HEK293 (cell line): ENCODE measurements at regions of chr20 and their contacts with region 1.

Region 1: DNA sequence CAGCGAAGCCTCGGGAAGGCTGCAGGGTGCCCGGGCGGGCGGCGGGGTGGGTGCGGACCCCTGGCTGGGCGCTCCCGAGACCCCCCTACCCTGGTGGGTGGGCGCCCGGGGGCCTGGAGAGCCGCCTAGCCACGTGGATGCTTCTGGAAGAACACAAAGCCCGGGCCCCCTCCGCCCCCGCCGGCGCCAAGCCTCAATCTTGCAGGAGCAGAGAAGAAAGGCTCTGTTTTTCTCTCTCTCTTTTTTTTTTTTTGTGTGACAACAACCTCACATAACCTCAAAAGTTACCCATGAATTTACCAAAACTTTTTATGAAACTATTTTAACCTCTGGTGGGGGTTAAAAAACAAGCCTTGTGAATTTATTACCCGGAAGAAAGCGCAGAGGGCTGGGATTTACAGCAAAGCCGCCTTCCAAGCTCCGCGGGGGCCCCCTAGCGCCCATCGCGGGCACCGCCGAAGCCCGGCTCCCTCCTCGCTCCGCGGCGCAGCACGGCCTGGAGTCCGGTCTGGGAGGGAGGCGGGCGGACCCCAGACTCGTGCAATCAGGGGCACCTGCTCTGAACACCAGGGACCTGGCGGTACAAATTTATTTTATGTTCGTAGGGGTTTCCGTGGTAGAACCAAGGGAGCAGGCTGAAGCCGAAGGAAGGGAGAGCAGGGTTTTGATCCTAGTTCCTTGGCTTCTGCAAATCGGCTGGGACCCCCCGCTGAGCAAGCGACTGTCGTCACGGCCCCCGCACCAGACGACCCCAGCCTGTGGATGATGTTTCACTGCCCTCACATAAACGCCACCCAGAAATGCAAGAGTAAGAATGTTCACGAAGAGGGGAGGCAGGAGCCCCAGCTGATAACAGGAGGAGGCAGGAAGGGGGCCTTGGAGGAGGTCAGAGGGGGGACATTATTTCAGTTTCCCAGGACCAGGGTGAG is 58.9 kb downstream of the ZNF831 start:
- H3K4me3 ChIP-seq: peak overlapping the region; percentile 35
- H3K27ac ChIP-seq: peak overlapping the region; percentile 24; the same call in 1 of the 2 replicates
- H3K4me1 ChIP-seq: no peaks in the 10 kb centered on the region
- CTCF ChIP-seq: peak; percentile 65; the same call in 1 of the 2 replicates

Region 2: DNA sequence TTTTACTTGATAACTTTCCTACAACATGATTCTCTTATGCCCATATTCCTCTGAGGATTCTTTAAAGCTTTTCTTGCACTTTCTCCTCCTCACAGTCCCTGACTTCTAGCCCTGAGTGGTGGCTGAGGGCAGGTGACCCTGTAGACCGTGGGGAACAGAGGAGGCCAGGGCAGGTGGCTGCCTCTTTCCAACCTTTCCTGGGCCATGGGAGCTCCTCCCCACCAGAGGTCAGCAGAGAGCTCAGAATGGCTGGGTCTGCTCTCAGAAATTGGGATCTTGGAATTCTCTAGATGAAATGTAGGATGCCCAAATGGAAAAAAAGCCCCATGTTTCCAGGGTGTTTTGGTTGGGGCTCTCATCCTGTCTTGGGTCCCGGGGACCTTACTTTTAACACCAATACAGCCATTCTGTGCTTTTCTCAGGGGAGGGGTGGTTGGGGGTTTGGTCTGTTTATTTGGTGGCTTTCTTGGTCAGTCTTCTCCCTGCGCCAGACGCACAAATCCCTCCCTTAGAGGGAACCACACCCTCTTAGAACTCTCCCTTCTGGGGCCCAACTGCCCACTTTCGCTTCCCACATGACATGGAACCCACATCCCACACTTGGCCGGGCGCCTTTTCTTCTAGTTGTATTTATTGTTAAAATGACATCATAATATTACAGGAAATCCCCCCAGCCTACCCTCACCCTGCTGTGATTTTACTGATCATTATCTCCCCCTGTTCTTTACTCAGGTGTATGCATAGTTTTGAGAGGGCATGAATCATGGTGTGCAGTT is 352.1 kb before region 1 on chr20:
- CTCF ChIA-PET with region 1: interaction called, 16 read pairs
- POLR2A ChIA-PET with region 1: no interaction called
- H3K4me3 ChIP-seq: no peak overlapping the region
- H3K27ac ChIP-seq: no peak overlapping the region
- H3K4me1 ChIP-seq: no peaks in the 10 kb centered on the region
- CTCF ChIP-seq: peak; percentile 40; the same call in 1 of the 2 replicates

Region 3: DNA sequence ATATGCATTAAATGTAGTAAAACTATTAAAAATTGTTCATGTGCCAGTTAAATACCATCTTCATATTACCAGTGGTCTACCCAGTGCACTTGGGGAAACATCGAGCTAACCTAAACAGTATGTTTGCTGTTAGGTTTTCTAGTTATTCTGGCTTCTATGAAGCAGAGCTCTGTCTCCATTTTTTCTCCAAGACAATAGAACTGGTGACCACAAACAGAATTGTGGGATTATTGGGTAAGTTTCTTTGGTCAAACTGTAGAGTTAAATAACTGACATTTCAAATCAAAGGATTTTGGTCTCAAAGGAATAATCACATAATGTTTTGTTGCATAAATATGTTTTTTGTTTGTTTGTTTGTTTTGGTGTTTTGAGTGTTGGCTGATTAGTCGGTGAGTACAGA is 37.4 kb after region 1 on chr20:
- CTCF ChIA-PET with region 1: no interaction called
- POLR2A ChIA-PET with region 1: no interaction called
- H3K4me3 ChIP-seq: no peak overlapping the region
- H3K27ac ChIP-seq: no peak overlapping the region
- H3K4me1 ChIP-seq: no peaks in the 10 kb centered on the region
- CTCF ChIP-seq: no peak

Region 4: DNA sequence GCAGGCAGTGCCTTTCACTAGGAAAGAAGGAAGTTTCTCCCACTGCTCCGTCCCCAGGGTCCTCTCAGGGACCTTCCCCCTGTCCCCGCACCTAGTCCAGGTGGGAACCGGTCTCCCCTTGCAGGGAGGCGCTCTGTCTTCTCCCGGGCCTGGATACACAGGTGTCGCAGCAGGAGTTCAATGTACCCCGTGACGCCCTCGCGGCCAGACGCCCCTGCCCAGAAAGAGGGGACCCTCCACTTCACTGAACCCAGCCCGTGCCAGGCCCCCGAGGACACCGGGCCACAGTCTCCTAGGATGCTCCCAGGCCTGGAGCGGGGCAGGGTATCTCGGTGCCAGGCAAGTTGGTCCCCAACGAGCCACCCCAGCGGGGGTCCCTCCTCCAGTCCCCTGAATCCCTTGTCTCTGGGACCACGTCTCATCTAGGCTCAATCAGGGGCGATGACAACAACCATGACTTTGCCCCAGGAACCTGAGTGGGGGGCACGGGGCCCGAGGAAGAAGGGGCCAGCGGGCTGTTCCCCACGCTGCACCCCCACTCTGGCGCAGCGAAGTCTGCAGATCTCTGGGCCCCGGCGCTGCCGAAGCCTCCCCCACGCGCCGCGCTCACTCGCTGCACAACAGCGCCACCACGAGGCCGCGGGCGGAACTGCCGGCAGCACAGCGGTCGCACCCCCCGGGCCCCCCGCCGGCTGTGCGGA is 180.9 kb after region 1 on chr20:
- CTCF ChIA-PET with region 1: interaction called, 11 read pairs
- POLR2A ChIA-PET with region 1: no interaction called
- H3K4me3 ChIP-seq: peak overlapping the region; percentile 6; the same call in 1 of the 2 replicates
- H3K27ac ChIP-seq: no peak overlapping the region
- H3K4me1 ChIP-seq: no peaks in the 10 kb centered on the region; the same call in 1 of the 2 replicates
- CTCF ChIP-seq: peak; percentile 91